ENCODE measurements at regions of chr2 and their contacts with region 1.

Region 1: DNA sequence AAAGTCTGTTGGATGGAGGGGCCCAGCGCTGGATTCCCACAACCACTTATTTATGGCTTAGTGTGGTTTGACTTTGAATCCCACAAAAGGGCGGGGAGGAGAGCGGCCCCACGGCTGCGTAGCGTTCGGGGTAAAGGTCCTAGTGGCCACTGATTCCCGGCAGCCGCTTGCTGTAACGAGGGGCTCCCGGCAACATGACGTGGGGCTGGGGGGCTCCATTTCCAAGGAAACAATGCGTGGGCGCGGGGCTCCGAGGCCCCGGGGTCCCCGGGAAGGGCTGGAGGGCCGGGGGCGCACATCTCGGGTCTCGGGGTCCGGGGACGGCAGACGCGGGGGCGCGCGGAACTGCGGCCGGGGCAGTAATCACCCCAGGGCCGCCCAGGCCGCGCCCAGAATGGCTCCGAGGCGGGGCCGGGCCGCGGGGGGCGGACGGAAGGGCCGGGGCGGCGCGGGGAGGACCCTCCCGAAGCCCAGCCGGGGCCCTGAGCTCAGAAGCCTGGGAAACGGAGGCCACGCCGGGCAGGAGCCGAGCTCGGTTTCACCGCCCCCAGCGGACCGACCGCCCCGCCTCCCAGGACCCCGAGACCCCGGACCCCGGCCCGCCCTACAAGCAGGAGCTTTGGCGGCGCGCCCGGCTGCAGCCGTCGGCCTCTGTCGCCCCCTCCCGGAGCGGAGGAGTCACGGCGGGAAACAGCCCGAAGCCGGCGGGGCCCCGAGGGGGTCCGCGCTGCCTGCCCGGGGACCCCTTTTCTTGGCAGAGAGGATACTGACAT is 11.9 kb upstream of the MLPH start:
- DNase-seq: peak; percentile 63 to 75 (median 69)
- H3K4me3 ChIP-seq: peak overlapping the region in 1 of 2 donors; percentile 64
- H3K4me3 Mint-ChIP-seq: peak overlapping the region; percentile 84 to 88 (median 87)
- H3K27ac ChIP-seq: peak overlapping the region; percentile 37
- H3K27ac Mint-ChIP-seq: peak overlapping the region in 6 of 7 donors; percentile 40 to 85 (median 76)
- H3K4me1 ChIP-seq: peaks cover 12% of the 10 kb centered on the region
- H3K4me1 Mint-ChIP-seq: peaks cover 0 to 13% (median 4%) of the 10 kb centered on the region in 4 donors
- H3K27me3 ChIP-seq: peaks cover 8% of the 10 kb centered on the region
- H3K27me3 Mint-ChIP-seq: peaks cover 3 to 23% of the 10 kb centered on the region in 2 donors

Region 2: DNA sequence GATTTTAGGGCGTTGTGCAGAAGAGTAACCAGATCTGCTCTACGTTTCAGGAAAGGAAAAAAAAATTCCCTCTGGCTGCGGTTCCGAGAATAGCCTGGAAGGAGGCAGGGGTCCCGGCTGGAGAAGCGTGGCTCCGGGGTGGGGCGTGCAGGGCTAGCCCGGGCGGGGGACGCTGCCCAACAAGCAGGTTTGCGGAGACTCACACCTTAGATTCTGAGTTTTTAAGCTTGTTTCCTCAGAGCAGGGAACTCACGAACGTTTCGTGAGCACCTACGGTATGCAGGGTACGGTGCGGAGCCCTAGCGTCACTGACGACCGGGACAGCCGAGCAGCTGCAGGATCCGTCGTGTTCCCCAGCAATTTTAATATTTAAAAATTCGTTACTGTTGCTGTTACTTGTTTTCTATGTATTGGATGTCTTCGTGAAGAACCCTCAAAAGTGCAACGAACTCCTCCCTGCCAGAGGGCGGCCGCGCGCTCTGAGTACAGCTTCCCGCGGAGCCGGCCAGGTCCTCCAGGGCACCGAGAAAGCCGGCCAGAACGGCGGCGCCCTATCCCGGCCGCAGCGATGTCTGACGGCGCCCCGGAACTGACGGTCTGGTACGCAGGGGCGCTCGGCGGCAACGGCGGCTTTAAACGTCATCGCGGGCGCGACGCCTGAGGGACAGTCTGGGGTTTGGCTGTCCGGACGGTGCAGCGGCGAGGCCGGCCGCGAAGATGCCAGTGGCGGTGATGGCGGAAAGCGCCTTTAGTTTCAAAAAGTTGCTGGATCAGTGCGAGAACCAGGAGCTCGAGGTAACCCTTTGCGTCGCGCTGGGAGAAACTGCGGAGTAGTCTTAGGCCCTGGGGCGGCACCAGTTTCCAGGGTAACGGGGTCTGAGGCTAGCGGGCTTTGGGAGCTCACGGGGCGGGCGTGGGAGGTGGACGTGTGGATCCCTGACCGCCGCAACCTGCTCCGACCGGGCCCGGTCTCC is 389.6 kb before region 1 on chr2 and contains the start of gene COPS8:
- CTCF ChIA-PET with region 1: interaction called, 3 read pairs
- POLR2A ChIA-PET with region 1: interaction called, 7 read pairs
- intact Hi-C with region 1: loop called (anchors 1 kb)
- DNase-seq: peak; percentile 88 to 91 (median 91)
- H3K4me3 ChIP-seq: peak within 1 kb of the TSS; percentile 48 to 79
- H3K4me3 Mint-ChIP-seq: peak within 1 kb of the TSS; percentile 99 to 100 (median 99)
- H3K27ac ChIP-seq: peak within 1 kb of the TSS; percentile 81
- H3K27ac Mint-ChIP-seq: peak within 1 kb of the TSS; percentile 97 to 100 (median 100)
- H3K4me1 ChIP-seq: peaks cover 16% of the 10 kb centered on the region
- H3K4me1 Mint-ChIP-seq: peaks cover 9 to 30% (median 16%) of the 10 kb centered on the region in 4 donors
- H3K27me3 ChIP-seq: no peaks in the 10 kb centered on the region
- H3K27me3 Mint-ChIP-seq: peaks cover 0 to 1% of the 10 kb centered on the region in 2 donors
- total RNA-seq, gene COPS8: 33.4 to 34.5 TPM

Region 3: GRCh38 chr2:237427769-237428506 is 47.2 kb before region 1 on chr2:
- CTCF ChIA-PET with region 1: interaction called, 381 read pairs
- POLR2A ChIA-PET with region 1: interaction called, 42 read pairs
- intact Hi-C with region 1: no loop called
- DNase-seq: peak in 1 of 5 donors; percentile 76
- H3K4me3 ChIP-seq: no peak overlapping the region
- H3K4me3 Mint-ChIP-seq: peak overlapping the region in 6 of 8 donors; percentile 3 to 78 (median 38)
- H3K27ac ChIP-seq: no peak overlapping the region
- H3K27ac Mint-ChIP-seq: peak overlapping the region; percentile 61 to 80 (median 66)
- H3K4me1 ChIP-seq: peaks cover 57% of the 10 kb centered on the region
- H3K4me1 Mint-ChIP-seq: peaks cover 52 to 67% (median 59%) of the 10 kb centered on the region in 4 donors
- H3K27me3 ChIP-seq: no peaks in the 10 kb centered on the region
- H3K27me3 Mint-ChIP-seq: no peaks in the 10 kb centered on the region

Region 4: DNA sequence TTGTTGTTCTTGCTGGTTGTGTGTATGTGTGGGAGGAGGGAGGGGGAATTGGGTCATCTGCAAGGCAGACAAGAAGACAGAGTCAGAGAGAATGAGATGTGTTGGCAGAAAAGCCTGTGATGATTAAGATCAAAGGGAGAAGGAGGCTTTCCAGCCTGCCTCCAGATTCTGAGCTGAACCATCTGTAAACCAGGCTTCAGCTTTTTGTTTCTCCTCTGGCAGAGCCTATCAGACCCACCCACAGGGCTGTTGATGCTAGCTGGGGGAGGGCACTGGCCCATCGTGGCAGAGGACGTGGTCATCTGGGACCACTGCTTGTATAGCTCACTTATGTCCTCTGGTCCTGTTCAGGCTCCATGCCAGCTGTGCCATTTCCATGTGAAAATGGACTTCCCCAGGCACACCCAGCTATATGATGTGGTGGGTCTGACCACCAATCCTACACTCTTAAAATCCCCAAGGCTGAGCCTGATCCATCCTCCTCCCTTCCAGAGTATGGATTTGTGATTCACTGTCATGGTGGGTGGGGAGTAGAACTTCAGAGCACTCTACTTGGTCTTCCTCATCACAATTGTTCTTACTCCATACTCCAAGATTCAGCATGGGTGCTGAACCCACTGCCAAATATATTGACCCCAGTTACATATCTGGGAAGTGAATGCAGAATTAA is 33.4 kb before region 1 on chr2:
- CTCF ChIA-PET with region 1: interaction called, 19 read pairs
- POLR2A ChIA-PET with region 1: interaction called, 7 read pairs
- intact Hi-C with region 1: no loop called
- DNase-seq: peak; percentile 38 to 59 (median 56)
- H3K4me3 ChIP-seq: no peak overlapping the region
- H3K4me3 Mint-ChIP-seq: peak overlapping the region in 7 of 8 donors; percentile 3 to 63 (median 28)
- H3K27ac ChIP-seq: no peak overlapping the region
- H3K27ac Mint-ChIP-seq: peak overlapping the region; percentile 31 to 87 (median 43)
- H3K4me1 ChIP-seq: peaks cover 45% of the 10 kb centered on the region
- H3K4me1 Mint-ChIP-seq: peaks cover 30 to 51% (median 42%) of the 10 kb centered on the region in 4 donors
- H3K27me3 ChIP-seq: no peaks in the 10 kb centered on the region
- H3K27me3 Mint-ChIP-seq: no peaks in the 10 kb centered on the region

Region 5: DNA sequence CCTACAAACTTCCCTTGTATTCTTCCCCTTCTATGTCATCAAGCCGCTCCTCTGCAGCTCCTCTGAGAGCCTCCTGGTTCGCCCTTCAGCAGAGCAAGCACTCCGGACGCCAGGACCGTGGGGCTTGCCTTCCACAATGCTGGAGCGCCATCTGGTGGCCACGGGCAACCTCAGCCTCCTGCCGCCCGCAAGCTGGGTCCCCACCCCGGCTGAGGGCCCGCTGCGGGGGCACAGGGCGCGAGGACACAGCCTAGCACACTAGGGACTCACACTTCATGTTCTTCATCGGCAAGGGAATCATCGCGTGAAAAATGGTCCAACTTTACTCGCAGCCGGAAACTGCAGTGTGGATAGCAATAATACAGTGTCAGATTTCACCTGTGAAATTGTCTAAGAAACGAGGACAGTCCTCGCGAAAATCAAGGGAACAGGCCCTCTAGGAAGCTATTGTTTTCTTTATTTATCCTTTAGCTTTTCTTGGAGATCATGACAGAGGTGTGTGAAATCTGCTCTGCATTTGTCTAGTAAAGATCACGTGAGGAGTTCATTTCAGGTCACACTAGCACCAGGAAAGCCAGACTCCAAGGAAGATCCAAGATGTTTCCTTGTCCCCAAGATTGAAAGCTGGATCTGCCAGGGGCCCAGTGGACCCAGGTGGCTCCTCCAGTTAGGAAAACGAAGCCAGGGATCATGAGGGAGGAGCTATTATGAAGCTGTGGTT is 97.1 kb after region 1 on chr2:
- CTCF ChIA-PET with region 1: interaction called, 12 read pairs
- POLR2A ChIA-PET with region 1: no interaction called
- intact Hi-C with region 1: no loop called
- DNase-seq: peak; percentile 73 to 80 (median 77)
- H3K4me3 ChIP-seq: no peak overlapping the region
- H3K4me3 Mint-ChIP-seq: no peak overlapping the region
- H3K27ac ChIP-seq: no peak overlapping the region
- H3K27ac Mint-ChIP-seq: peak overlapping the region in 1 of 7 donors; percentile 53
- H3K4me1 ChIP-seq: no peaks in the 10 kb centered on the region
- H3K4me1 Mint-ChIP-seq: peaks cover 0 to 6% (median 3%) of the 10 kb centered on the region in 4 donors
- H3K27me3 ChIP-seq: no peaks in the 10 kb centered on the region
- H3K27me3 Mint-ChIP-seq: peaks cover 4 to 6% of the 10 kb centered on the region in 2 donors

Region 6: DNA sequence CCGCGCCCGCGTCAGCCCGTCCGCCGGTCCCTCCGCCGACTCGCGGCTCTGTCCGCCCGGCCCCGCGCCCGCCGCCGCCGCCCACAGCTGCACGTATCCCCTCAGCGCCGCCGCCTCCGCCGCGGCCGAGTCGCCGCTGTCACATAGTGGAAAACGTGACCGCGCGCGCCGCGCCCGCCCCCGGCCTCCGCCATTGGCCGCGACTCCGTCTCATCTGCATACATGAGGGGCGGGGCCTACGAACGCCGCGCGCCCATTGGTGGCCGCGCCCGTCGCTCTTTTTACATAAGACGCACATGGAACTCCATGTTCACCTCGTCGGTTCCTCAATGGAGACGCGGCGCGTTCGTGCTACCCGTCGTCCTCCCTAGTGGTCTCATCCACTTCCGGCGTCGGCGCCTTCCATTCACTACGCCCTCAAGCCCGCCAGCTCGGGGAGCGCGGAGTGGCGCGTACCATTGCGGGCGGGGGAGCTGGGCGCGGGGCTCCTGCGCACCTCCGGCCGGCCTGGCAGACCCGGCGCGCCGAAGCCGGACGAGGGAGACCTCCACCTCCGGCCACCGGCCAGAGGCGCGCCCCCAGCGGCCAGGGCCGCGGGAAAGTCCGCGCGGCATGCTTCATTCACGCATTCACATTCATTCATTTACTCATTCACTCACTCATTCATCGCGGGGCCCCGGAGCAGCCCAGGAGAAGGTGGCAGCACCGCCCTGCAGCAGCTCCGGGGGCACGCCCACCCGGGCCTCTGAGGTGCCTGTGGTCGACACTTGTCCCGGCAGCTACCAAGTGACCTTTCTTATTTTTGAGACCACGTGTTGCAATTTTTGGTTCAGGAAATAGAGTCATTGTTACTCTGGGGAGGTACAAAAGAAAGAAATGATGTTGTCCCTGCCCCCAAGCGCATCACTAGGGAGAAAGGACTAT is 813.8 kb after region 1 on chr2:
- CTCF ChIA-PET with region 1: no interaction called
- POLR2A ChIA-PET with region 1: no interaction called
- intact Hi-C with region 1: no loop called
- DNase-seq: peak; percentile 97 to 99 (median 98)
- H3K4me3 ChIP-seq: peak overlapping the region; percentile 45 to 80
- H3K4me3 Mint-ChIP-seq: peak overlapping the region; percentile 83 to 95 (median 92)
- H3K27ac ChIP-seq: peak overlapping the region; percentile 72
- H3K27ac Mint-ChIP-seq: peak overlapping the region; percentile 92 to 98 (median 97)
- H3K4me1 ChIP-seq: peaks cover 35% of the 10 kb centered on the region
- H3K4me1 Mint-ChIP-seq: peaks cover 17 to 52% (median 36%) of the 10 kb centered on the region in 4 donors
- H3K27me3 ChIP-seq: no peaks in the 10 kb centered on the region
- H3K27me3 Mint-ChIP-seq: no peaks in the 10 kb centered on the region